Dorsolateral prefrontal cortex (tissue), 120 donors: ENCODE measurements at regions of chr1 and their contacts with region 1.

Region 1: DNA sequence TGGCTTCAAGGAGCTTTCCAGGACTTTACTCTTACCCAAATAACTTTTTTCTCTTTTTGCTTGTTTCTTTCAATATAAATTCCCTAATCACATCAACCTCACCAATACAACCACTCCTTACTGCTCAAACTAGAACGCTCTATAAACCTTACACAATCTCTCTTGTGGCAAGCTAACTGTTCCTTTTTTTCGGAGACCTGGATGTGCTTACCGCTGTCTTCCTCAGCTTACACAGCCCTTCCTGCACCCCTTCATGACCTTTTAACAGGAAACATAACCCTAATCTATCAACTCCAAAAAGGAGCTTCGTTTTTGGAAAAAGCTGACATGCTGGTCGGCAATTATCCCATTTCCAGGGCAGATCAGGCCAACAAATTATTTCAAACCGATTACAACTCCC is 24.1 kb upstream of the SLC2A5 start:
- DNase-seq: no peak
- H3K4me3 ChIP-seq: no peak overlapping the region
- H3K27ac ChIP-seq: no peak overlapping the region
- H3K27me3 ChIP-seq: no peaks in the 10 kb centered on the region
- CTCF ChIP-seq: no peak

Region 2: DNA sequence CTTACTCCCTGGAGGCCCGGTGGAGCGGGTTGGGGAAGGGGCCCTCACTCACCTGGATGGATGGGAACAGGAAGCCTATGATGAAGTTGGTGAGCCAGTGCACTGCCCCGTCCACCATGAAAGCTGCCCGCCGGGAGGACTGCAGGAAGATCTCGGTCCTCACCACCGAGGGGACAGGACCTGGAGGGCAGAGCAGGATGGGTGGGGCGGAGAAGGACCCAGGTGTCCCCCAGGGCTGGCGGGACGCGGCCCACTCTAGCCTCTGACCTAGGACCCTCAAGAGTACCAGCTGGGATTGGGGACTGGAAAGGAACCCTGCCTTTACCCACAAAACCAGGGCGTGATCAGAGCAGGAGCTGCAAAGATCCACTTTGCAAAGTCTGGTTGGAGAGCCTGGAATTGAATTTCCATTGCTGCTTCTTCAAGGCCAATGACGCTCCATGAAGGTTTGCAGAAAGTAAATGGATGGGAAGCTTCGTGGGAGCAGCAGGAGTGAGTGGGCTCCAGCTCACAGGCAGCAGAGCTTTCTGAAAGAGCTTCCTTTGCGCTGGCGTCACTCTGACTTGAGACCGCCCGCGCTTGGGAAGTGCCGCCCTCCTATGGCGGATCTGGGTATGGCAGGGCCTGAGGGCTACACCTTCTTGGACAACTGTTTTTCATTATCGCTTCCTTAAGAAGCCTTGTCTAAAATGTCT is 88.7 kb before region 1 on chr1:
- intact Hi-C with region 1: loop called in 1 of 2 experiments (anchors 5 kb)
- DNase-seq: peak; percentile 26 to 82 (median 74)
- H3K4me3 ChIP-seq: no peak overlapping the region
- H3K27ac ChIP-seq: no peak overlapping the region
- H3K27me3 ChIP-seq: no peaks in the 10 kb centered on the region
- CTCF ChIP-seq: peak; percentile 67 to 96 (median 88)